Heart left ventricle (tissue), 16 donors: ENCODE measurements at regions of chr4 and their contacts with region 1.

Region 1: GRCh38 chr4:38190717-38191178 is 230.6 kb downstream of the PTTG2 start:
- DNase-seq: peak in 4 of 5 donors; percentile 65 to 79 (median 70)
- ATAC-seq: peak; percentile 94 to 96 (median 96)
- H3K4me3 ChIP-seq: no peak overlapping the region
- H3K27ac ChIP-seq: peak overlapping the region; percentile 6 to 95 (median 82)
- H3K4me1 ChIP-seq: peaks cover 0 to 51% (median 14%) of the 10 kb centered on the region in 12 donors
- H3K27me3 ChIP-seq: no peaks in the 10 kb centered on the region
- CTCF ChIP-seq: no peak
- POLR2A ChIP-seq: no peak

Region 2: GRCh38 chr4:37710491-37710890 is 480.3 kb before region 1 on chr4:
- intact Hi-C with region 1: no loop called
- DNase-seq: no peak
- ATAC-seq: no peak
- H3K4me3 ChIP-seq: no peak overlapping the region
- H3K27ac ChIP-seq: no peak overlapping the region
- H3K4me1 ChIP-seq: no peaks in the 10 kb centered on the region
- H3K27me3 ChIP-seq: no peaks in the 10 kb centered on the region
- CTCF ChIP-seq: no peak
- POLR2A ChIP-seq: no peak

Region 3: DNA sequence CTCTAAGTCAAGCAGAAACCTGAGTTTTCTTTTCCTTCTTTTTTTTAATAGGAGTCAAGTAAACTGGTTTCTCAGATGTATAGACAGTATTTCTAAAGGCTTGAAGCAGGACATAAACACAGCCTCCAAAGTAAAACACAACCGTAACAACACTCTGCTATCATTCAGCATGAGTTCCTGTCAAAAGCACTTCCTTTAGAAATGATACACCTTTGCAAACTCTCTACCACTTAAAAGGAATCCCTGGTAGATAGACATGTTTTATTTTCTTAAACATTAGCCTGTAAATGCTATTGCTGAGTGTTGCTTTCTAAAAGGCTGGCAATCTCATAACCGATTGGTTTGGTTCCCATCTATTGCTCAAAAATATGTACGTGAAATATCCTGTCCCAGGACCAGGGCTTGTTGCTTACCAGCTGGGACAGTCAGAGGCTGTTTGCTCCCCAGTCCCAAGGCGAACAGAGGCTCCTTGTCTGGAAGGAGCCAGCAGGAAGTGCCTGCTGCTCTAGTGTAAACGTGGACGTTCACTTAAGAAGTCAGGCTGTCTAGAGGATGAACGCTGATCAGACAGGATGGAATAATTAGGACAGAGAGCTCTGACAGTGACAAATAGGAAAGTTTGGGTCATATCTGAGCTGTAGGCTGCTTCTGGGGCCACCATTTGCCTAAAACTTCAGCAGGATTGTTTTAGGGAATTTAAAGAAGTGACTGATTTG is 299.3 kb after region 1 on chr4:
- intact Hi-C with region 1: loop called in 1 of 10 experiments (anchors 10 kb)
- DNase-seq: peak in 2 of 5 donors; percentile 34 to 46
- ATAC-seq: peak; percentile 49 to 89 (median 72)
- H3K4me3 ChIP-seq: no peak overlapping the region
- H3K27ac ChIP-seq: peak overlapping the region in 8 of 12 donors; percentile 1 to 71 (median 46)
- H3K4me1 ChIP-seq: peaks cover 0 to 22% (median 14%) of the 10 kb centered on the region in 12 donors
- H3K27me3 ChIP-seq: no peaks in the 10 kb centered on the region
- CTCF ChIP-seq: no peak
- POLR2A ChIP-seq: no peak